Heart right ventricle (tissue), 16 donors: ENCODE measurements at regions of chr9 and their contacts with region 1.

Region 1: DNA sequence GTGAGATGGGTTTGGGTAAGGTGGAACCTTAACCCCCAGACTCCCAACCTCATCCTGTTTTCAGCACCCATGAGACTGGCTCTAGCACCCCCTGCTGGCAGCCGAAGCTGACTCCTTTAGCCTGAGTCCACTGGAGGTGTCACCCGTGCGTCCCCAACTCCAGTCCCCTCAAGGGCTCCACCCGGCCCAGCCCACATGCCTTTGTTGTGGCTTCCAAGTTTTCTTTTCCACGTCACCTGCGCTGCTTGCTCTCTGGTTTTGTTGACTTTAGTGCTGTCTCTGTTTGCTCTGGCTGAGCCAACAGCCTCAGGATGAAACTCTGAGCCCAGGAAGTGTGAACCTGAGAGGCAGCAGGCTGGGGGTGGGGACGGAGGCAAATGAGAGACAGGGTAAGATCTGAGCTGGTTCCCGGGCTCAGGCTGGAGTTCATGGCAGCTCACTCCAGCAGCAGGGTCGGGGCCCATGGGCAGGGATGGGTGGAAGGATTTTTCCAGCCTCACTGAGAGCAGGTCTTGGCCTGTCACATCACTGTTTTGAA is 13.2 kb upstream of the AQP7 start:
- DNase-seq: peak; percentile 71 to 81
- ATAC-seq: peak; percentile 77 to 89 (median 84)
- H3K4me3 ChIP-seq: no peak overlapping the region
- H3K27ac ChIP-seq: no peak overlapping the region
- H3K4me1 ChIP-seq: peaks cover 4 to 14% (median 8%) of the 10 kb centered on the region in 9 donors
- H3K27me3 ChIP-seq: no peaks in the 10 kb centered on the region
- CTCF ChIP-seq: peak; percentile 42 to 86 (median 79)

Region 2: DNA sequence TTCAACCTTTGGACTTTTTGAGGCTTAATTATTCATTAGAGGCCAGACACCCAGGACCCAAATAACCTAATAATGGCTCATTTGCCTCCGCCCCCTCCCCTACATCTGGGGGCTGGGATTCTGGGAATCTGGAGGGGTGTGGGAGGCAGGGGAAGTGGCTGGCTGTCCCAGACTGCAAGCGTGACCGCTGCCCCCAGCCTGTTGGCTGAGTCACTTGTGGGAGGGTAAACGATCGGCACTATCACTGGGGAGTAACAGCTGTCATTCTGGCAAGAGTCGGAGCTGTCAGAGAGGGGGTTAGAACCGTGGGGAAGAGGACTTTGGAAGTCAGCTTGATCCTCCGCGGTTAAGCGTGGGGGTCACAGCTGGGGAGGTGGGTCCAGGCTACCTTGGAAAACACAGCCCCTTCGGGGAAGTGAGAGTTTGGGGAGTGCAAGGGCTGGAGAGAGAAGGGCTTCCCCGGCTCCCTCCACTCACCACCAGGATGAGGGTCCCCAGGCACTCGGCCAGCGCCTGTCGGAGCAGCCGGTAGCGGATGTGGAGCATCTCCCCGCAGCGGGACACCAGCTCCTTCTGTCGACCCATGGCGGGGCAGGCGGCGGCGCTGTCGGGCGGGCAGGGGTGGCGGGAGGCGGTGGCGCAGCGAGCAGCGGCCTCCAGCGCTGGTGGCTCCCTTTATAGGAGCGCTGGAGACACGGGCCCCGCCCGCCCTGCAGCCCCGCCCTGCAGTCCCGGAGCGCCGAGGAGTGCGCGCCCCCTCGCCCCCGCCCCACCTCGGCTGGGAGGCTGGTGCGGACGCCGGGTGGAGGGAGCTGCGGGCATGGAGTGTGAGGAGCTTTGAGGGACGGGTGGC is 31.6 kb after region 1 on chr9 and contains the start of gene AQP3:
- intact Hi-C with region 1: loop called in 1 of 10 experiments (anchors 5 kb)
- DNase-seq: peak; percentile 61 to 74
- ATAC-seq: peak; percentile 84 to 91 (median 87)
- H3K4me3 ChIP-seq: peak within 1 kb of the TSS; percentile 27 to 65 (median 59)
- H3K27ac ChIP-seq: peak within 1 kb of the TSS in 9 of 10 donors; percentile 49 to 80 (median 61)
- H3K4me1 ChIP-seq: peaks cover 0 to 25% (median 19%) of the 10 kb centered on the region in 9 donors
- H3K27me3 ChIP-seq: peaks cover 0 to 12% (median 0%) of the 10 kb centered on the region in 7 donors
- CTCF ChIP-seq: peak in 7 of 9 donors; percentile 17 to 62 (median 44)
- total RNA-seq, gene AQP3: 1.9 to 37.2 (median 10.1) TPM